ENCODE measurements at regions of chr7 and their contacts with region 1.

Region 1: DNA sequence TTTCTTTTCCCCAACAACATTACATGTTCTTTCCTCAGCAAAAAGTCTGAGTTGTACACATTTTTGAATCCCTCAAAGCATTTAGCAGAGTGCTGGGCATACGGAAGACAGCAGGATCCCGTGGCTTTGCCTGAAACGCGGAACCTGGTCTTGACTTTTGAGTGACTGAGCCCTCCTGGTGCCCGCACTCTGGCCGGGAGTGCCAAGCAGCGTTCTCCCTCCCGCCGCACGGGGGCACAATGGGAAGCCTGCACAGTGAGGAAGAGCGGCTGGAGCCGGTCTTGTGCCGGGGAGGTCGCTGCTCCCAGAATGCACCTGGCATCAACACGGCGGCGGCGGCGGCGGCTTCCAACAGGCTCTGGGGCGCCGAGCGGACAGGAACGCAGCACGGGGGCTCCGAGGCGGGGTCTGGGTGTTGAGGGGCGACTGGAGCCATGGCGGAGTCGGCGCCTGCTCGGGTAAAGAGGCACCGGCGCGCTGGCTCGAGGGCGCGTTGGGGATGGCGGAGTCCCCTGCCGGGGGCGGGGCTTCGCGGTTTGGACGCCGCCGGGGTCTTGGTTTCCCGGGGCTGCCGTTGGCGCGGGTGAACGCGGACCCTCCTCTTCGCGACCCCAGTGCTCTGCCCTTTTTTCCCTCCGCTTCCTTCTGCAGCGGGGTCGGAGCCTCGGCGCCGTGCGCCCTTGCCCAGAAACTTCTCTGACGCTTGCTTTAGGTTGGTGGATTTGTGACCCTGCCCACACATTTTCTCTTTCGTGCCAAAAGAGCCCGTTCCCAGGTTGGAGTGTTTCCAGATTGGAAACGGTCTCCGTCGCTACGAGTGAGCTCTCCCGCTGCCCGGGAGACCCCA is at the start of gene ZNF212:
- DNase-seq: peak; percentile 26
- H3K4me3 ChIP-seq: peak within 1 kb of the TSS; percentile 95
- CTCF ChIP-seq: peak; percentile 99

Region 2: GRCh38 chr7:149253658-149254057 is 14.1 kb after region 1 on chr7:
- CTCF ChIA-PET with region 1: interaction called, 15 read pairs
- POLR2A ChIA-PET with region 1: no interaction called
- DNase-seq: no peak
- H3K4me3 ChIP-seq: no peak overlapping the region
- CTCF ChIP-seq: no peak

Measured in AG04449 (cell line).